GM12878 (cell line): ENCODE measurements at regions of chr6 and their contacts with region 1.

Region 1: GRCh38 chr6:107674995-107675738 is 148.9 kb downstream of the SCML4 start:
- DNase-seq: peak; percentile 45
- ATAC-seq: peak; percentile 96
- H3K4me3 ChIP-seq: no peak overlapping the region; the same call in 1 of the 2 replicates
- H3K27ac ChIP-seq: peak overlapping the region; percentile 42; the same call in 1 of the 2 replicates
- H3K4me1 ChIP-seq: peaks cover 19% of the 10 kb centered on the region
- H3K27me3 ChIP-seq: no peaks in the 10 kb centered on the region
- CTCF ChIP-seq: peak; percentile 86 to 94 (median 87)
- EP300 ChIP-seq: no peak
- POLR2A ChIP-seq: no peak
- RAD21 ChIP-seq: peak; percentile 96

Region 2: DNA sequence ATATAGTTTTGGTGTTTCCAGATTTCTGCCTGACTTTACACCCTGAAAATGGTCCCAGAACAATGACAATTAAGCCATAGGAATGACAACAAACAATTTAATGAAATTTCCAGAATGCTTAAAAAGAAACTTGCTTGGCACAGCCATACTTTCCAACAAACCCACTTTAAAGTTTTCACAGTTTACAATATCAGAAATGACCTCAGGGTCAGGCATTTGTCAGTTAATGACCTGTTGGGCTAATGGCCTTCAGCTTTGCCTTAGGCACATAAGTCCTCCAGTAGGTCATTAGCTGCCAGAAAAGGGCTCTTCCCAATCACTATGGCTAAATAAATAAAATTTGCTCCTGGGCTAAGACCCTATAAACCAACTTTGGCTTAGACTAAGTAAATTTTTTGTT is 415.2 kb before region 1 on chr6:
- CTCF ChIA-PET with region 1: no interaction called
- POLR2A ChIA-PET with region 1: no interaction called
- RAD21 ChIA-PET with region 1: no interaction called
- SMC1A ChIA-PET with region 1: no interaction called
- in situ Hi-C with region 1: no loop called
- intact Hi-C with region 1: no loop called
- DNase-seq: no peak
- ATAC-seq: no peak
- H3K4me3 ChIP-seq: no peak overlapping the region
- H3K27ac ChIP-seq: no peak overlapping the region
- H3K4me1 ChIP-seq: no peaks in the 10 kb centered on the region
- H3K27me3 ChIP-seq: no peaks in the 10 kb centered on the region
- CTCF ChIP-seq: no peak
- EP300 ChIP-seq: no peak
- POLR2A ChIP-seq: no peak
- RAD21 ChIP-seq: no peak

Region 3: GRCh38 chr6:107459283-107460082 is 215.7 kb before region 1 on chr6 and contains the start of gene PDSS2:
- CTCF ChIA-PET with region 1: interaction called, 4 read pairs
- POLR2A ChIA-PET with region 1: no interaction called
- RAD21 ChIA-PET with region 1: interaction called, 3 read pairs
- SMC1A ChIA-PET with region 1: interaction called, 3 read pairs
- in situ Hi-C with region 1: no loop called
- intact Hi-C with region 1: loop called (anchors 2 kb)
- DNase-seq: peak; percentile 91
- ATAC-seq: peak; percentile 94
- H3K4me3 ChIP-seq: peak within 1 kb of the TSS; percentile 94
- H3K27ac ChIP-seq: peak within 1 kb of the TSS; percentile 90
- H3K4me1 ChIP-seq: no peaks in the 10 kb centered on the region; the same call in 1 of the 2 replicates
- H3K27me3 ChIP-seq: no peaks in the 10 kb centered on the region
- CTCF ChIP-seq: peak; percentile 32 to 54 (median 51)
- EP300 ChIP-seq: no peak
- POLR2A ChIP-seq: peak; percentile 97
- RAD21 ChIP-seq: peak; percentile 10; the same call in 1 of the 2 replicates
- polyA plus RNA-seq, gene PDSS2: 7.9 to 9.1 TPM

Region 4: GRCh38 chr6:107657755-107658461 is 17.3 kb before region 1 on chr6:
- CTCF ChIA-PET with region 1: interaction called, 10 read pairs
- POLR2A ChIA-PET with region 1: interaction called, 6 read pairs
- RAD21 ChIA-PET with region 1: interaction called, 6 read pairs
- SMC1A ChIA-PET with region 1: interaction called, 43 read pairs
- in situ Hi-C with region 1: no loop called
- intact Hi-C with region 1: no loop called
- DNase-seq: peak; percentile 96
- ATAC-seq: peak; percentile 92
- H3K4me3 ChIP-seq: peak overlapping the region; percentile 64
- H3K27ac ChIP-seq: peak overlapping the region; percentile 84
- H3K4me1 ChIP-seq: peaks cover 19% of the 10 kb centered on the region
- H3K27me3 ChIP-seq: no peaks in the 10 kb centered on the region
- CTCF ChIP-seq: peak; percentile 4 to 47 (median 43); a peak in 3 of 6 replicates
- EP300 ChIP-seq: peak in 1 of 2 experiments; percentile 57; a peak in 1 of 4 replicates
- POLR2A ChIP-seq: peak; percentile 64
- RAD21 ChIP-seq: 0 out of 2 replicates have a peak, but pooled peaks have one; percentile 0

Region 5: DNA sequence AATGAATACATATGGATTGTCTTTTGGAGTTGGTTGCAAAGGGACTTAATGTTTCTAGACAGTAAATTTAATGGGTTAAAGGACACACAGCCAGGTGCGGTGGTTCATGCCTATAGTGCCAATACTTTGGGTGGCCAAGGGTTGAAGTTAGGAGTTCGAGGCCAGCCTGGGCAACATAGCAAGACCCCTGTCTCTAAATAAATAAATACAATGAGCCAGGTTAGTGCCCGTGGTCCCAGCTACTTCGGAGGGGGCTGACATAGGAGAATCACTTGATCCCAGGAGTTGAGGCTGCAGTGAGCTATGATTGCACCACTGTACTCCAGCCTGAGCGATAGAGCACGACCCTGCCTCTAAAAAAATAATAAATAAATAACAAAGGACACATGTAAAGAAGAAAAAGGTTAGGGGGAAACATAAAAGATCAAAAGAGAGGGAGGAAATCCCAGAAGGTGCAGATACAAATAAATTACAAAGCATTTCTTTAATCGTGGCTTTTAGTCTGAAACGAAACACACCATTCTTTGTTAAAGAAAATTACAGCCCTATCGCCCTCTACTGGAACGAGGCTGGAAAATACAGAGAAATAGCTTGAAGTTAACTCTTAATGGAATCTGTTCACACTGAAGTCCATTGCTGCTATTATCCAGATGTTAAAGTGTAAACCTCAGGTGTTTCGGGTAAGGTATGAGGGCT is 191.6 kb after region 1 on chr6:
- CTCF ChIA-PET with region 1: interaction called, 4 read pairs
- POLR2A ChIA-PET with region 1: no interaction called
- RAD21 ChIA-PET with region 1: no interaction called
- SMC1A ChIA-PET with region 1: interaction called, 5 read pairs
- in situ Hi-C with region 1: no loop called
- intact Hi-C with region 1: loop called (anchors 5 kb)
- DNase-seq: no peak
- ATAC-seq: peak; percentile 74
- H3K4me3 ChIP-seq: no peak overlapping the region
- H3K27ac ChIP-seq: no peak overlapping the region
- H3K4me1 ChIP-seq: 0 out of 2 replicates have a peak, but pooled peaks cover 5% of the 10 kb centered on the region
- H3K27me3 ChIP-seq: no peaks in the 10 kb centered on the region
- CTCF ChIP-seq: peak; percentile 35 to 68 (median 35); a peak in 5 of 6 replicates
- EP300 ChIP-seq: no peak
- POLR2A ChIP-seq: no peak
- RAD21 ChIP-seq: peak; percentile 31; the same call in 1 of the 2 replicates

Region 6: DNA sequence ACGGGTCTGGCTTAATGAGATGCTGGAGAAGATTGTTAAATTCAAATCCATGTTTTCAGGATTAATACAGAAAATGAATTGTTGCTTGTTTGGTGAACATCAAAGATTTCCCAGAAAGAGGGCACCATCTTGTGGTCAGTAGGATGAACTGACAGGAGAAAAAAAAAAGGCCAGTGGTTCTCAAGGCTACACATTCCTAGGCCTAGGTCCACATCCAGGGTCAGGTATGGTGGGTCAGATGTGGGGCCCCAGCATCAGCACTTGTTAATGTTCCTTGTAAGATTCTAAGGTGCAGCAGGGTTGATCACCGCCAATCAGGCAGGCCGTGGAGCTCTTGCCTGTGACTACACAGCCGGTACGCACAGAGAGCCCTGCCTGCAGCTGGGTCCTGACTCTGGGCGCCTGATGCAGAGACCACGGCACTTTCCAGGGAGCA is 851.6 kb after region 1 on chr6:
- CTCF ChIA-PET with region 1: no interaction called
- POLR2A ChIA-PET with region 1: no interaction called
- RAD21 ChIA-PET with region 1: no interaction called
- SMC1A ChIA-PET with region 1: no interaction called
- in situ Hi-C with region 1: no loop called
- intact Hi-C with region 1: loop called (anchors 10 kb)
- DNase-seq: no peak
- ATAC-seq: peak; percentile 57
- H3K4me3 ChIP-seq: no peak overlapping the region
- H3K27ac ChIP-seq: no peak overlapping the region
- H3K4me1 ChIP-seq: no peaks in the 10 kb centered on the region
- H3K27me3 ChIP-seq: peaks cover 0 to 2% of the 10 kb centered on the region in 2 experiments; a peak in 2 of 4 replicates
- CTCF ChIP-seq: peak; percentile 76 to 80 (median 80)
- EP300 ChIP-seq: no peak
- POLR2A ChIP-seq: no peak
- RAD21 ChIP-seq: peak; percentile 89